ENCODE measurements at regions of chr2 and their contacts with region 1.

Region 1: GRCh38 chr2:3651691-3652648 is 6.0 kb upstream of the ALLC start:
- DNase-seq: peak; percentile 51 to 83 (median 62)
- ATAC-seq: peak; percentile 75
- H3K4me3 ChIP-seq: peak overlapping the region; percentile 60
- H3K4me3 Mint-ChIP-seq: peak overlapping the region; percentile 91
- H3K27ac ChIP-seq: peak overlapping the region; percentile 12 to 29
- H3K27ac Mint-ChIP-seq: peak overlapping the region; percentile 65
- H3K4me1 ChIP-seq: peaks cover 21% of the 10 kb centered on the region
- H3K4me1 Mint-ChIP-seq: peaks cover 17% of the 10 kb centered on the region
- H3K27me3 ChIP-seq: peaks cover 0 to 2% of the 10 kb centered on the region in 2 experiments
- H3K27me3 Mint-ChIP-seq: no peaks in the 10 kb centered on the region
- CTCF ChIP-seq: no peak

Region 2: GRCh38 chr2:3242747-3243369 is 409.1 kb before region 1 on chr2:
- CTCF ChIA-PET with region 1: no interaction called
- POLR2A ChIA-PET with region 1: no interaction called
- intact Hi-C with region 1: loop called in 1 of 2 experiments (anchors 5 kb)
- DNase-seq: peak in 12 of 14 experiments; percentile 9 to 84 (median 32)
- ATAC-seq: peak; percentile 89
- H3K4me3 ChIP-seq: peak overlapping the region; percentile 14
- H3K4me3 Mint-ChIP-seq: peak overlapping the region; percentile 78
- H3K27ac ChIP-seq: peak overlapping the region; percentile 47 to 64
- H3K27ac Mint-ChIP-seq: no peak overlapping the region
- H3K4me1 ChIP-seq: peaks cover 52% of the 10 kb centered on the region
- H3K4me1 Mint-ChIP-seq: peaks cover 13% of the 10 kb centered on the region
- H3K27me3 ChIP-seq: no peaks in the 10 kb centered on the region
- H3K27me3 Mint-ChIP-seq: no peaks in the 10 kb centered on the region
- CTCF ChIP-seq: no peak

Region 3: DNA sequence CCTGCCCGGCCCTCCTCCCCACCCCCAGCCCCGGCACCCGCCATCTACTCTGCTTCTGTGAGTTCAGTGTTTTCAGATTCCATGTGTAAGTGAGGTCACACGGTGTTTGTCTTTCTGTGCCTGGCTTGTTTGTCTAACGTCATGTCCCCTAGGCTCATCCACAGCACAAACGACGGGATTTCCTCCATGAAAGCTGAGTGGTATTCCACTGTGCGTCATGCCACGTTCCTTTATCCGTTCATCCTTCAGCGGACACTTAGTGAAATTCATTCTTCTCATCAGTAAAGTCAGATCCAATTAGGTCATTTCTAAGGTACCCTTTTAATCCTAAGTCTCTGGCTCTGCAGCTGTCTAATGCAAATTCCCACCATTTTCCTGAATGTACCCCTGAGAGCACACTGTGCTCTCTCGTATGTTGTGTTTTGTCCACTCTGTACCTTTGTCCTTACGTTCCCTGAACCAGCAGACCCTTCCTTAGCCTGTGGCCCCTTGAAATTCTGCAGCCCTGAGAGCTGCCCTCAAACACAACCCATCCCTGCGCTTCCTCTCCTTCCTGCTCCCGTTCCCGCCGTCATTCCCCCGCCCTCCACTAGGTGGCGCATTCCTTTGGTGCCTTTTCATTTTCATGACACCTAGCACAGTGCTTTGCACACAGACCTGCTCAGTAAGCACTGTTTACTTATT is 228.3 kb before region 1 on chr2:
- CTCF ChIA-PET with region 1: no interaction called
- POLR2A ChIA-PET with region 1: no interaction called
- intact Hi-C with region 1: loop called (anchors 1 kb)
- DNase-seq: peak; percentile 54 to 81 (median 70)
- ATAC-seq: peak; percentile 60
- H3K4me3 ChIP-seq: no peak overlapping the region
- H3K4me3 Mint-ChIP-seq: no peak overlapping the region
- H3K27ac ChIP-seq: no peak overlapping the region
- H3K27ac Mint-ChIP-seq: no peak overlapping the region
- H3K4me1 ChIP-seq: no peaks in the 10 kb centered on the region
- H3K4me1 Mint-ChIP-seq: peaks cover 5% of the 10 kb centered on the region
- H3K27me3 ChIP-seq: no peaks in the 10 kb centered on the region
- H3K27me3 Mint-ChIP-seq: no peaks in the 10 kb centered on the region
- CTCF ChIP-seq: peak; percentile 99

Region 4: DNA sequence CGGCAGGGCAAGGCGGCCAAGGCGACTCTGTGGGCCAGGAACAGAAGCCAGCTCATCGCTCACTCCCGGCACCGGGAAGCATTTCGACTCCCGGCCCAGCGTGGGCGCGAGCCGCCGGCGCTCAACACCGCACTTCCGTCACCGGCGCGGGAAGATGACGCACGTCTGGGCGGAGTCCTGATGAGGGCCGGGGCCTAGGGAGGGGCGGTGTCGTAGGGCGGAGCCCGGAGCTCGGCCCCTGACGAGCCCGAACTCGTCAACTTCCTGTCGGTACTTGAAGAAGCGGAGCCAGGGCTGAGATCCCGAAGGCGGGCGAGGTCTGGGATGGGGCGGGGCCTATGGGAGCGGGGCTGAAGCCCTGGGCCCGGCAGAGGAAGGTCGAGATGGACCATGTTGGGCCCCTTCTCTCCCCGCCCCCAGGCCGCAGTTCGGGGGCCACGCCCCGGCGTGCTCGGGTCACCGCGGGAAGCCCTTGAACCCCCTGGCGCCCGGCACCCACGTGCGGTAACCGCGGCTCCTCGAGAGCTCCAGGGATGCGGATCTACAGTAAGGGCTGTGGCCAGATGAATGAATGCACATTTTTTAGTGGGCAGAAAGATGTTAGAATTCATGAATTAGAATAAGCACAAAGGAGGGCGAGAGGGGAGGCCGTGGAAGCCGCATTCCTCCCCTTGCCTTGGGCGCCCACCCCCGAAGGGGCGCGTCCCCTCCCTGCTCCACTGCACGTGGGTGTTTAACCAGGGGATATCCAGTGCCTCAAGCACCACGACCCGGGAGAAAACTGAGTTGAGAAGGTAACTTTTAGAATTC is 93.6 kb before region 1 on chr2 and contains the start of gene RNASEH1:
- CTCF ChIA-PET with region 1: no interaction called
- POLR2A ChIA-PET with region 1: interaction called, 14 read pairs
- intact Hi-C with region 1: loop called in 1 of 2 experiments (anchors 5 kb)
- DNase-seq: peak; percentile 95 to 99 (median 98)
- ATAC-seq: peak; percentile 96
- H3K4me3 ChIP-seq: peak within 1 kb of the TSS; percentile 83
- H3K4me3 Mint-ChIP-seq: peak within 1 kb of the TSS; percentile 96
- H3K27ac ChIP-seq: peak within 1 kb of the TSS; percentile 92 to 93
- H3K27ac Mint-ChIP-seq: peak within 1 kb of the TSS; percentile 96
- H3K4me1 ChIP-seq: peaks cover 22% of the 10 kb centered on the region
- H3K4me1 Mint-ChIP-seq: peaks cover 47% of the 10 kb centered on the region
- H3K27me3 ChIP-seq: no peaks in the 10 kb centered on the region
- H3K27me3 Mint-ChIP-seq: no peaks in the 10 kb centered on the region
- CTCF ChIP-seq: no peak
- total RNA-seq, gene RNASEH1: 31.5 to 31.9 TPM

Region 5: DNA sequence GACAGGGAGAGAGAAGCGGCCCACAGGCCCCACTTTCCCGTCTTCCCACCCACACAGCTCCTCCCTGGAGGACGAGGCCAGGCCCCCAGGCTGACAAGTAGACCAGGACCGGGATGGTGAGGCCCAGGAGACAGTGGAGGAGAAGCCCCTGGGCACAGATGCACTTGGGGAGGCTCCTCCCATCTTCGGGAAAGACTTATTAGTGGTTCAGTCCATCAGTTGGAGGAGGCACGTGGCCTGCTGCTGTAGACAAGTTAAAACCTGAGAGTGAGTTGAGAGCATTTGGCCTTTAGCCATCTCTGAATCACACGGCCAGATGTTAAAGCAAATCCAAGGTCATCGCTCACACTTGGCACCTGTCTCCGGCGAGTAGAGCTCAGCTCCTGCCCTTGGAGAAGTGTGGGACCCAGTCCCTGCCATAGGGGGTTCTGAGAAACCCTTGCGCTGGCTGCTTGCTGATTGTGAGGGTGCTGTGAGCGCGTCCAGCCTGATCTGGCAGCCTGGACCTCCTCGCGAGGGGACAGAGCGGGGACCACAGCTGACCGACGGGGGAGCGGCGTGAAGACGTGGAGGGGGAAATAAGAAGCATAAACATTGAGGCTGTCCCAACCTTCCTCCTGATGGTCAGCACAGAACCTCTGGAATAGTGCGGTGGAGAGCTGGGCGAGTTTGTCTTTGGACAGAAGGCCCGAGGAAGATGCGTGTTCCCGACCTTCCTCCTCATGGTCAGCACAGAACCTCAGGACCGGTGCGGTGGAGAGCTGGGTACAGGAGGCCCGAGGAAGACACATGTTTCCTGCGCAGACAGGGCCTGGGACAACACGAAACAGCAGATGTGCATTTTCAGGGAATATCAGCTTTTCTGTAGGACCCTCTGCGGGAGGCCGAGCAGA is 18.6 kb before region 1 on chr2:
- CTCF ChIA-PET with region 1: no interaction called
- POLR2A ChIA-PET with region 1: no interaction called
- intact Hi-C with region 1: no loop called
- DNase-seq: peak in 2 of 14 experiments; percentile 2 to 24
- ATAC-seq: no peak
- H3K4me3 ChIP-seq: no peak overlapping the region
- H3K4me3 Mint-ChIP-seq: no peak overlapping the region
- H3K27ac ChIP-seq: no peak overlapping the region
- H3K27ac Mint-ChIP-seq: no peak overlapping the region
- H3K4me1 ChIP-seq: no peaks in the 10 kb centered on the region
- H3K4me1 Mint-ChIP-seq: no peaks in the 10 kb centered on the region
- H3K27me3 ChIP-seq: no peaks in the 10 kb centered on the region
- H3K27me3 Mint-ChIP-seq: no peaks in the 10 kb centered on the region
- CTCF ChIP-seq: no peak

Region 6: GRCh38 chr2:4445821-4446220 is 793.9 kb after region 1 on chr2:
- CTCF ChIA-PET with region 1: no interaction called
- POLR2A ChIA-PET with region 1: no interaction called
- intact Hi-C with region 1: no loop called
- DNase-seq: no peak
- ATAC-seq: no peak
- H3K4me3 ChIP-seq: no peak overlapping the region
- H3K4me3 Mint-ChIP-seq: no peak overlapping the region
- H3K27ac ChIP-seq: no peak overlapping the region
- H3K27ac Mint-ChIP-seq: no peak overlapping the region
- H3K4me1 ChIP-seq: no peaks in the 10 kb centered on the region
- H3K4me1 Mint-ChIP-seq: no peaks in the 10 kb centered on the region
- H3K27me3 ChIP-seq: no peaks in the 10 kb centered on the region
- H3K27me3 Mint-ChIP-seq: no peaks in the 10 kb centered on the region
- CTCF ChIP-seq: no peak